BJ (cell line): ENCODE measurements at regions of chr4 and their contacts with region 1.

Region 1: DNA sequence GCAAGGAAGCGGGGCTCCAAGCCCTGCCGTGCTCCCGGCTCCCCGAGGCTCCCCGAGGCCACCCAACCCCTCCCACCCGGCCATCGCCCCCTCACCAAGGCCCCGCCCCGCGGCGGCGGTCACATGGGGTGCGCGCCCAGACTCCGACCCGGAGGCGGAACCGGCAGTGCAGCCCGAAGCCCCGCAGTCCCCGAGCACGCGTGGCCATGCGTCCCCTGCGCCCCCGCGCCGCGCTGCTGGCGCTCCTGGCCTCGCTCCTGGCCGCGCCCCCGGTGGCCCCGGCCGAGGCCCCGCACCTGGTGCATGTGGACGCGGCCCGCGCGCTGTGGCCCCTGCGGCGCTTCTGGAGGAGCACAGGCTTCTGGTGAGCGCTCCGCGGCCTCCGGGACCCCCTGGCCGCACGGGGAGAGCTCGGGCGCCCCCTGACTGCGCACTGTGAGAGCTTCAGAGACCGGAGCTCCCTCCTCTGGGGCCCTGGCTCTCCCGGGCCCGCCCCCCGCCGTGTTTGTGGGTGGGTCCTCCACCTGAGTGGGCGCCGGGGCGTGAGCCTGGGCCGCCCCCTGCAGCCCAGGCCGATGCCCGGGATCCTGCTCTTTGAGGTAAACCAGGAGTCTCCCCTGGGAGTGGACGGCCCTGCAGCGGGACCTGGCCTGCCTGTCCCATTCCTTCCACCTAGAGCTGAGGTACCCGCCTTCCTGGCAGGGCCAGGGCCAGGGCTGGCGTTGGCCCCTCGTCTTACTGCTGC is at the start of gene IDUA:
- DNase-seq: no peak
- H3K4me3 ChIP-seq: peak within 1 kb of the TSS; percentile 50
- H3K27me3 ChIP-seq: no peaks in the 10 kb centered on the region
- CTCF ChIP-seq: peak; percentile 60
- polyA plus RNA-seq, gene IDUA: 7.5 and 13.2 TPM in 2 replicates

Region 2: GRCh38 chr4:742742-743311 is 244.2 kb before region 1 on chr4:
- CTCF ChIA-PET with region 1: interaction called, 15 read pairs
- POLR2A ChIA-PET with region 1: no interaction called
- DNase-seq: no peak
- H3K4me3 ChIP-seq: no peak overlapping the region
- H3K27me3 ChIP-seq: no peaks in the 10 kb centered on the region
- CTCF ChIP-seq: peak; percentile 92